IMR-90 (cell line): ENCODE measurements at regions of chr6 and their contacts with region 1.

Region 1: GRCh38 chr6:110537208-110538123 is 61.1 kb upstream of the SLC22A16 start:
- DNase-seq: peak; percentile 97
- ATAC-seq: peak; percentile 86
- H3K4me3 ChIP-seq: no peak overlapping the region
- H3K27ac ChIP-seq: peak overlapping the region; percentile 36
- H3K4me1 ChIP-seq: peaks cover 9% of the 10 kb centered on the region
- H3K27me3 ChIP-seq: no peaks in the 10 kb centered on the region
- CTCF ChIP-seq: no peak
- POLR2A ChIP-seq: no peak
- RAD21 ChIP-seq: no peak

Region 2: DNA sequence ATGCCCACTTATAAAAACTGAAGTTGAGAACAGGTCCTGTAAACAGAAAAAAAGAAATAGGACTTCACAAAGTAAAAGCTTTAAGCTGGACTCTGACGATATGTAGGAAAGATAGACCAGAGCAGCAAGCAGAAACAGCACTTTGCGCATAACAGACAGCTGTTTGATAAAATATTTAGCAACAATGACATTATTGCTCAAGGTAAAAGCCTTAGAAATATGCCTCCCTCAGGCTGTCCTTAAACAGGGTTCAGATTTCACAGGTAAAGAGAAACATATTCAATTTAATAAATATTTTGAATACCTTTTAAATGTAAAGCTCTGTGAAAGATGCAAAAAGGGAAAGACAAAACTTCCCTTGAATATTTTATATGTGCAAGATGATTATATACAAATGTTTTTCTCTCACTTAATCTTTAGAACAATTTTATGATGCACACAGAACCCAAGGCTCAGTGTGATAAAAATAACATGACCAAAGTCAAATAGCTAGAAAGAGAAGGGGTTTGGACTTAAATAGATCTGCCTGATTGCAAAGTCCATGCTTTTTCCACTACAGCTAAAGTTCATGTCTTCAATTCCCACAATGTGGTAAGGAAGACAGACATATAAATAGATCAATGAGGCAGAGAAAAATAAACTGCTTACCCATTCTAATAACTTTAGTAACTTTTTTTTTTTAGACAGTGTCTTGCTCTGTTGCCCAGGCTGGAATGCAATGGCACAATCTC is 133.8 kb after region 1 on chr6:
- CTCF ChIA-PET with region 1: no interaction called
- POLR2A ChIA-PET with region 1: no interaction called
- dilution Hi-C with region 1: no loop called
- in situ Hi-C with region 1: loop called (anchors 10 kb)
- intact Hi-C with region 1: no loop called
- DNase-seq: no peak
- ATAC-seq: no peak
- H3K4me3 ChIP-seq: no peak overlapping the region
- H3K27ac ChIP-seq: no peak overlapping the region
- H3K4me1 ChIP-seq: no peaks in the 10 kb centered on the region
- H3K27me3 ChIP-seq: no peaks in the 10 kb centered on the region
- CTCF ChIP-seq: no peak
- POLR2A ChIP-seq: no peak
- RAD21 ChIP-seq: no peak

Region 3: DNA sequence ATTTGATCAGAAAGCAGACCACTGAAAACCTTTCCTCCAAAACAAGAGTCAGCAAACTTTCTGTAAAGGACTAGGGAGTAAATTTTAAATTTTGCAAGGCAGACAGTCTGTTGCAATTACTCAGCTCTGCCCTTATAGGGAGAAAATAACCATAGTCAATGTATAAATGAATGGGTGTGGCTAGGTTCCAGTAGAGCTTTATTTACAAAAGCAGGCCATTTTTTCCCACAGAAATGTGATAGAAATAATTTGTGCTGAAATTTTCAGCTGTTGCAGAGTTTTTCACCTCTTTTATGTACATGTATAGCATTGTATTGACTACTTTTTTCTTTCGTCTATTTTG is 344.8 kb after region 1 on chr6:
- CTCF ChIA-PET with region 1: no interaction called
- POLR2A ChIA-PET with region 1: no interaction called
- dilution Hi-C with region 1: no loop called
- in situ Hi-C with region 1: loop called (anchors 5 kb)
- intact Hi-C with region 1: no loop called
- DNase-seq: peak; percentile 44
- ATAC-seq: 0 out of 2 replicates have a peak, but pooled peaks have one; percentile 27
- H3K4me3 ChIP-seq: no peak overlapping the region
- H3K27ac ChIP-seq: peak overlapping the region; percentile 79; the same call in 1 of the 2 replicates
- H3K4me1 ChIP-seq: peaks cover 18% of the 10 kb centered on the region
- H3K27me3 ChIP-seq: no peaks in the 10 kb centered on the region
- CTCF ChIP-seq: no peak
- POLR2A ChIP-seq: no peak
- RAD21 ChIP-seq: no peak

Region 4: GRCh38 chr6:110999634-111000270 is 462.3 kb after region 1 on chr6:
- CTCF ChIA-PET with region 1: no interaction called
- POLR2A ChIA-PET with region 1: no interaction called
- dilution Hi-C with region 1: loop called (anchors 10 kb)
- in situ Hi-C with region 1: no loop called
- intact Hi-C with region 1: no loop called
- DNase-seq: peak; percentile 46
- ATAC-seq: peak; percentile 54; the same call in 1 of the 2 replicates
- H3K4me3 ChIP-seq: no peak overlapping the region
- H3K27ac ChIP-seq: no peak overlapping the region
- H3K4me1 ChIP-seq: no peaks in the 10 kb centered on the region
- H3K27me3 ChIP-seq: no peaks in the 10 kb centered on the region
- CTCF ChIP-seq: peak; percentile 56
- POLR2A ChIP-seq: no peak
- RAD21 ChIP-seq: peak; percentile 62